ENCODE measurements at regions of chr12 and their contacts with region 1.

Region 1: DNA sequence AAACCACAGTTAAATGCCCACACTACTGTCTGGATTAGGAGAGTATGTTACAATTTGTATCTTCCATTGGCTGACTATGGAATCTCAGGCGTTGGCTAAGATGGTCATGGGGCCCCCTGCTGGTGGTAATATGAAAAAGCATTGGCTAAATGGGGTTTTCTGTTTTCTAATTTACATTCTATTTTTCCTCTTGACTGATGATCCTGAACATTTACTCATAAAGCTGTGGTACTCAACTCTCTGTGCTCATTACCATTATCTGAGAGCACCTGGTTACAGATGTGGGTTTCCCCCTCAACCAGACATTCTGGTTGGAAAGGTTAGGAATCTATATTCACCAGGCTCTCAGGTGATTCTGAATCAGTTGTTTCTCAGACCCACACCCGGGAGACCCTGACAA is 64.8 kb downstream of the WSCD2 start:
- DNase-seq: peak in 2 of 9 donors; percentile 3 to 7
- ATAC-seq: no peak
- H3K4me3 ChIP-seq: no peak overlapping the region
- H3K4me3 Mint-ChIP-seq: no peak overlapping the region
- H3K27ac ChIP-seq: no peak overlapping the region
- H3K27ac Mint-ChIP-seq: no peak overlapping the region
- H3K4me1 ChIP-seq: no peaks in the 10 kb centered on the region
- H3K4me1 Mint-ChIP-seq: peaks cover 0 to 2% (median 0%) of the 10 kb centered on the region in 7 donors
- H3K27me3 ChIP-seq: no peaks in the 10 kb centered on the region
- H3K27me3 Mint-ChIP-seq: peaks cover 0 to 58% (median 35%) of the 10 kb centered on the region in 5 donors

Region 2: GRCh38 chr12:107677671-107678070 is 516.2 kb before region 1 on chr12:
- CTCF ChIA-PET with region 1: no interaction called
- POLR2A ChIA-PET with region 1: no interaction called
- intact Hi-C with region 1: loop called in 1 of 2 experiments (anchors 2 kb)
- DNase-seq: no peak
- ATAC-seq: no peak
- H3K4me3 ChIP-seq: no peak overlapping the region
- H3K4me3 Mint-ChIP-seq: no peak overlapping the region
- H3K27ac ChIP-seq: no peak overlapping the region
- H3K27ac Mint-ChIP-seq: no peak overlapping the region
- H3K4me1 ChIP-seq: no peaks in the 10 kb centered on the region
- H3K4me1 Mint-ChIP-seq: peaks cover 0 to 5% (median 0%) of the 10 kb centered on the region in 7 donors
- H3K27me3 ChIP-seq: no peaks in the 10 kb centered on the region
- H3K27me3 Mint-ChIP-seq: peaks cover 0 to 26% (median 8%) of the 10 kb centered on the region in 5 donors

Region 3: DNA sequence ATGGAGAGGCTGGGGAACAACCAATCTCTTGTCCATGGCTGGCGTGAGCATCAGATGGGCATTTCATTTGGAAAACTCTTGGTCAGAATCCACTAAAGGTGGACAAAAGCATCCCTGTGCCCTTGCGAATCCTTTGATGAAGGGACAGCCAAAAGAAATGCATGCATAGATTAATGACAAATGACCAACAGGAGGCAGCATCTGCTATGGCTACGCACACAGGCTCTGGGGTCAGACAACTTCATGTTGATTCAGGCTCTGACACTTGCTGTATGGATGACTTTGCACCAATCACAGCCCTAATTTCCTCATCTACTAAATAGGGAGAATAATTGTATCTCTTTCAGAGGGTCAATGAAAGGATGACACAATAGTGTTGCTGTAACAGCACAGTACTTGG is 301.9 kb before region 1 on chr12:
- CTCF ChIA-PET with region 1: no interaction called
- POLR2A ChIA-PET with region 1: no interaction called
- intact Hi-C with region 1: no loop called
- DNase-seq: no peak
- ATAC-seq: no peak
- H3K4me3 ChIP-seq: no peak overlapping the region
- H3K4me3 Mint-ChIP-seq: no peak overlapping the region
- H3K27ac ChIP-seq: no peak overlapping the region
- H3K27ac Mint-ChIP-seq: no peak overlapping the region
- H3K4me1 ChIP-seq: no peaks in the 10 kb centered on the region
- H3K4me1 Mint-ChIP-seq: no peaks in the 10 kb centered on the region
- H3K27me3 ChIP-seq: no peaks in the 10 kb centered on the region
- H3K27me3 Mint-ChIP-seq: peaks cover 2 to 37% (median 23%) of the 10 kb centered on the region in 5 donors

Region 4: GRCh38 chr12:107912421-107913004 is 281.4 kb before region 1 on chr12:
- CTCF ChIA-PET with region 1: no interaction called
- POLR2A ChIA-PET with region 1: no interaction called
- intact Hi-C with region 1: loop called in 1 of 2 experiments (anchors 10 kb)
- DNase-seq: peak in 7 of 9 donors; percentile 26 to 78 (median 41)
- ATAC-seq: peak; percentile 74
- H3K4me3 ChIP-seq: no peak overlapping the region
- H3K4me3 Mint-ChIP-seq: peak overlapping the region; percentile 65 to 91 (median 74)
- H3K27ac ChIP-seq: no peak overlapping the region
- H3K27ac Mint-ChIP-seq: peak overlapping the region in 1 of 9 donors; percentile 61
- H3K4me1 ChIP-seq: no peaks in the 10 kb centered on the region
- H3K4me1 Mint-ChIP-seq: peaks cover 0 to 7% (median 5%) of the 10 kb centered on the region in 7 donors
- H3K27me3 ChIP-seq: no peaks in the 10 kb centered on the region
- H3K27me3 Mint-ChIP-seq: peaks cover 33 to 70% (median 54%) of the 10 kb centered on the region in 5 donors

Region 5: GRCh38 chr12:108865169-108865568 is 671.3 kb after region 1 on chr12:
- CTCF ChIA-PET with region 1: no interaction called
- POLR2A ChIA-PET with region 1: no interaction called
- intact Hi-C with region 1: no loop called
- DNase-seq: no peak
- ATAC-seq: no peak
- H3K4me3 ChIP-seq: no peak overlapping the region
- H3K4me3 Mint-ChIP-seq: no peak overlapping the region
- H3K27ac ChIP-seq: no peak overlapping the region
- H3K27ac Mint-ChIP-seq: no peak overlapping the region
- H3K4me1 ChIP-seq: no peaks in the 10 kb centered on the region
- H3K4me1 Mint-ChIP-seq: peaks cover 0 to 6% (median 3%) of the 10 kb centered on the region in 7 donors
- H3K27me3 ChIP-seq: no peaks in the 10 kb centered on the region
- H3K27me3 Mint-ChIP-seq: peaks cover 0 to 4% (median 0%) of the 10 kb centered on the region in 5 donors

Measured in naive thymus-derived CD4-positive, alpha-beta T cell (primary cell).